Activated CD8-positive, alpha-beta T cell treated with anti-CD3 and anti-CD28 coated beads for 36 hours (primary cell): ENCODE measurements at regions of chr6 and their contacts with region 1.

Region 1: GRCh38 chr6:47309291-47310130 is at the start of gene TNFRSF21:
- DNase-seq: peak; percentile 91
- ATAC-seq: peak; percentile 96
- H3K4me3 Mint-ChIP-seq: peak within 1 kb of the TSS; percentile 71
- H3K27ac Mint-ChIP-seq: no peak within 1 kb of the TSS
- H3K4me1 Mint-ChIP-seq: peaks cover 8% of the 10 kb centered on the region
- H3K27me3 Mint-ChIP-seq: peaks cover 35% of the 10 kb centered on the region
- CTCF ChIP-seq: peak; percentile 94
- total RNA-seq, gene TNFRSF21: 2.3 to 2.5 TPM

Region 2: GRCh38 chr6:46848684-46849360 is 460.7 kb before region 1 on chr6:
- CTCF ChIA-PET with region 1: interaction called, 7 read pairs
- POLR2A ChIA-PET with region 1: no interaction called
- intact Hi-C with region 1: loop called (anchors 5 kb)
- DNase-seq: peak; percentile 75
- ATAC-seq: peak; percentile 73
- H3K4me3 Mint-ChIP-seq: peak overlapping the region; percentile 15
- H3K27ac Mint-ChIP-seq: no peak overlapping the region
- H3K4me1 Mint-ChIP-seq: peaks cover 2% of the 10 kb centered on the region
- H3K27me3 Mint-ChIP-seq: peaks cover 19% of the 10 kb centered on the region
- CTCF ChIP-seq: peak; percentile 95

Region 3: GRCh38 chr6:47091886-47092668 is 217.4 kb before region 1 on chr6:
- CTCF ChIA-PET with region 1: interaction called, 37 read pairs
- POLR2A ChIA-PET with region 1: no interaction called
- intact Hi-C with region 1: loop called (anchors 5 kb)
- DNase-seq: no peak
- ATAC-seq: no peak
- H3K4me3 Mint-ChIP-seq: no peak overlapping the region
- H3K27ac Mint-ChIP-seq: no peak overlapping the region
- H3K4me1 Mint-ChIP-seq: no peaks in the 10 kb centered on the region
- H3K27me3 Mint-ChIP-seq: peaks cover 2% of the 10 kb centered on the region
- CTCF ChIP-seq: no peak

Region 4: DNA sequence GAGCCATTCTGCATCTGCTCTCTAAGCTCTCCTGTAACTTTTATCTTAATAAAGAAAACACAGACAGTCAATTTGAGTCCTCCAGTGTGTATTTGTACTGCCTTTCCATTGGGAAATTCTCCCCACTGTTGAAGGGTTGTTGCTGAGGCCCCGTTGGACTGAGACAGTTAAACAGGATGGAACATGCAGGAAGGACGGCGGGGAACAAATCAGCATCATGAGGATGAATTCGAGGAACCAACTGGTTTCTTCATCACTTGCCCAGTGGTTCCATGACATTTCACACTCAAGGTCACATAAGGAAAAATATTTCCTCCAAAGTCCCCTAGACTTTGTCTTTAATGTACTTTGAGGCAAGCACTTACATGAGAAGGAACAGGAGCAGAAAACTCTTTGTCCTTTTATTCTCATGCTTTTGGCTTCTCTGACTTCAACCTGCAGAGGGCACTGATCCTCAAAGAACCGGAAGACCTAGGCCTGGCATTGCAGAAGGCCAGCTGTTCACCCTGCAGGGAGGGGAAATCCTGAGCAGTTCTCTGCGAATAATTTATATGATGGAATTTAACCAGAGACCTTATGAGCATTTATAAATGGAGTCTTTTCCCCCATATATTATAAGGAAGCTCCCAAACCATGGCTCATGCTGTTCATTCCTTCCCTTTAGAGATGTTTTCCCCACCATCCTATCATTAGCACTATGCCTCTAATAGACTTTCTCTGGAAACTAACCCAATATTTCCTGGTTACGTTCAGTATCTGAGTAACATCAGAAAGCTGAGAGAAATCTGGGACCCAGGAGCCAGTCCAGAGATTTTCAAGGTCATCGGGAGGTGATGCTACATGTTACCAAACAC is 212.2 kb before region 1 on chr6:
- CTCF ChIA-PET with region 1: interaction called, 37 read pairs
- POLR2A ChIA-PET with region 1: no interaction called
- intact Hi-C with region 1: loop called (anchors 5 kb)
- DNase-seq: peak; percentile 72
- ATAC-seq: peak; percentile 90
- H3K4me3 Mint-ChIP-seq: no peak overlapping the region
- H3K27ac Mint-ChIP-seq: no peak overlapping the region
- H3K4me1 Mint-ChIP-seq: no peaks in the 10 kb centered on the region
- H3K27me3 Mint-ChIP-seq: peaks cover 2% of the 10 kb centered on the region
- CTCF ChIP-seq: peak; percentile 54